Activated CD4-positive, alpha-beta T cell treated with anti-CD3 and anti-CD28 coated beads for 36 hours (primary cell): ENCODE measurements at regions of chr2 and their contacts with region 1.

Region 1: DNA sequence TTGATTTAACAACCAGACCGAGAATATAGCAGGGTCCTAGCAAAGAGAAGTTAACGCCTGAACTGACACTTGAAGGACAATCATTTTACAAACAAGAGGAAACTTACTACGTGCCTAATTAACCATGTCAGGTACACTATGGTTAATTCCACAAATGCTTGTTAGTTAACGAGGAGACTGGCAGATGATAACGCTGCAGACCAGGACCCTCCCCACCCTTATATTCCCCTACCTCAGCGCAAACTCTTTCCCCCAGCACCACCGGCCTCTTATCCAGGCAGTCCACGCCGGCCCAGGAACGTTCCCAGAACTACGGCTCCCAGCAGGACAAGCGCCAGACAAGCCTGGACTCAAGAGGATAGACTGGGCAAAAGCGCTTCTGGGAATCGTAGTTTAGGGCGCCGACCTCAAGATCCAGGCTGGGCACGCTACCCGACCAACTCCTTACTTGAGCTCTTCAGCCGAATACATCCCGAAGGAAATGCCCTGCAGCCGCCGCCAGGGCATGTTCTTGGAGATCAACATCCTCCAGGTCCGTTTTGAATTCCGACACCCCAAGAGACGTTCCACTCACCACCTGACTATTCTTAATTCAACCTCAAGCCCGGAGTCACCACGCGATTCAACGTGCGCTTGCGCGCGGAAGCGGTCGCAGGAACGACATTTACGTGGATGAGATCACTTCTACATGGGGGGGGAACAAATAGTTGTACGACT is at the start of gene POLR1A:
- DNase-seq: peak; percentile 90
- ATAC-seq: peak; percentile 75
- H3K4me3 Mint-ChIP-seq: peak within 1 kb of the TSS; percentile 88
- H3K27ac Mint-ChIP-seq: peak within 1 kb of the TSS; percentile 99
- H3K4me1 Mint-ChIP-seq: peaks cover 54% of the 10 kb centered on the region
- H3K27me3 Mint-ChIP-seq: no peaks in the 10 kb centered on the region
- total RNA-seq, gene POLR1A: 38.1 to 45.5 TPM

Region 2: DNA sequence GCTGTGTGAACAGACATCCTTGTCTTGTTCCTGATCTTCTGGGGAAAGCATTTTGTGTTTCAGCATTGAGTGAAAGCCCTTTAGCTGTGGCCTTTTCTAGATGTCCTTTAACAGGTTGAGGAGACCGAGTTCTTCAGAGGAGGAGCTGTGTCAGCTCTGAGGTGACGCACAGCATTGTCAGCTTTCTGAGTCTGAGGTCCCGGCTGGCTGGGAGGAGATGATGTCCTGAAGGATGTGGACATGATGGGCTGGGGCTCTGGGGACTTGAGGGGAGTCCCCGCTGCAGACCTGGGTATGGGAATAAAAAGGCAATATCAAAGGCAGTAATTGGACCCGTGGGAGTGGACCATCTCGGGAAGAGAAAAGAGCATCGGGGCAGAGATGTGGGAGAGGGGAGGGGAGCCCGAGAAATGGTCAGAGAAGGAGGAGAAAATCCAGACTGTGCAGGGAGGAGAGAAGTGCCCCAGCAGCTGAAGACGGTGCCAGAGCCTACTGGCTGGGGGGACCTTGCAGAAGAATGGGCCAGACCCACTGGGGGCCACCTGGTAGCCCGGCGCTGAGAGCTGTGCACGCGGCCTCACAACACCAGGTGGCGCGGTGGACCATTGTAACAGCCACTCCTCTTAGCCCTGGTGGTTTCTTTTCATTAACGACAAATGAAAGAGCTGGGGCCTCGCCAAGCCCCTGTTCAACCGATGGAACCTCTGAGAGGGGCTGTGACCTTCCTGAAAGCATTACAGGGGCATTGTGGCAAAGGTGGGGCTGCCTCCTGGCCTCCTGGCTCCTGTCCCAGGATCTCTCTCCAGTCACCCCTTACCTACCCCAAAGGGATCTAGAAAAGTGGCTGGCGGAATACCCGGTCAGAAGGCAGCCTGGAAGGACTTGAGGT is 278.2 kb before region 1 on chr2:
- CTCF ChIA-PET with region 1: interaction called, 5 read pairs
- POLR2A ChIA-PET with region 1: interaction called, 3 read pairs
- intact Hi-C with region 1: loop called in 1 of 2 experiments (anchors 1 kb)
- DNase-seq: peak; percentile 90
- ATAC-seq: peak; percentile 93
- H3K4me3 Mint-ChIP-seq: no peak overlapping the region
- H3K27ac Mint-ChIP-seq: peak overlapping the region; percentile 10
- H3K4me1 Mint-ChIP-seq: peaks cover 15% of the 10 kb centered on the region
- H3K27me3 Mint-ChIP-seq: no peaks in the 10 kb centered on the region

Region 3: GRCh38 chr2:86185517-86186212 is 80.3 kb after region 1 on chr2:
- CTCF ChIA-PET with region 1: no interaction called
- POLR2A ChIA-PET with region 1: interaction called, 5 read pairs
- intact Hi-C with region 1: loop called in 1 of 2 experiments (anchors 2 kb)
- DNase-seq: no peak
- ATAC-seq: peak; percentile 53
- H3K4me3 Mint-ChIP-seq: peak overlapping the region; percentile 61
- H3K27ac Mint-ChIP-seq: peak overlapping the region; percentile 94
- H3K4me1 Mint-ChIP-seq: peaks cover 73% of the 10 kb centered on the region
- H3K27me3 Mint-ChIP-seq: no peaks in the 10 kb centered on the region

Region 4: DNA sequence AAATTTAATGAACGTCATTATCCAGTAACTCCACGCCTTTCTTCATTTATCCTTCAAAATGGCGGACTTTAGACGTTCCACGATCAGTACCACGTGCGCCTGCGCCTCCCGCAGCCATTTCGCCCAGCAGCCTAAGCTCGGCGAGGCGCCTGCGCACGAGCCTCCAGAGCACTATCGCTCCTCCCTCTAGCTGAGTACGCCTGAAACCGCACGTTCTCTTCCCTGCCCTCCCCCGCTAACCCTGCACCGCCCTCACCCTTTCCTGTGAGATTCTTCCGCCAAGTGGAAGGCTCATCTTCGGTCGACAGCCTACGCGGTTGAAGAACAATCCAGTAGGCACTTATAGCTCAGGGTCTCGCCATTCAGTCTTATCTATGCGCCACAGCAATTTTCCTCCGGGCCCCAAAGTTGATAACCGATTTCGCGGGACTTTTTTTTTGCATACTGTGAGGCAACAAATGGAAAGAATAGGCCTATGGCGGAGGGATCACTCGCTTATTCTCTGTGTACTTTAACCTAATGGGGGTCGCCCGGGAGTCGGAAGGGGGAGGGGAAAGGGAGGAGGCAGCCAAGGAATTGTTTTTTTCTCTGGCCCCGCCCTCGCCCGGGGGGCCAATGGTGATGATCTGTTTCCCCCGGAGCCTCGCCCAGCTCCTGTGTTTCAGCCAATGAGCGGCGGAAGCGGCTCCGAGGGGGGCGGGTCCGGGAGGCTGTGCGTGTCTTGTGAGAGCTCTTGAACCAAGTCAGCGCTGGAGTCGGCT is 335.4 kb after region 1 on chr2 and contains the start of gene KDM3A:
- CTCF ChIA-PET with region 1: no interaction called
- POLR2A ChIA-PET with region 1: no interaction called
- intact Hi-C with region 1: loop called (anchors 1 to 5 kb)
- DNase-seq: peak; percentile 100
- ATAC-seq: peak; percentile 88
- H3K4me3 Mint-ChIP-seq: peak within 1 kb of the TSS; percentile 90
- H3K27ac Mint-ChIP-seq: peak within 1 kb of the TSS; percentile 99
- H3K4me1 Mint-ChIP-seq: peaks cover 37% of the 10 kb centered on the region
- H3K27me3 Mint-ChIP-seq: no peaks in the 10 kb centered on the region
- total RNA-seq, gene KDM3A: 68.9 to 82.9 TPM

Region 5: GRCh38 chr2:86623651-86624541 is 518.5 kb after region 1 on chr2 and contains the start of gene RNF103:
- CTCF ChIA-PET with region 1: no interaction called
- POLR2A ChIA-PET with region 1: no interaction called
- intact Hi-C with region 1: loop called in 1 of 2 experiments (anchors 5 kb)
- DNase-seq: peak; percentile 96
- ATAC-seq: peak; percentile 89
- H3K4me3 Mint-ChIP-seq: peak within 1 kb of the TSS; percentile 95
- H3K27ac Mint-ChIP-seq: peak within 1 kb of the TSS; percentile 96
- H3K4me1 Mint-ChIP-seq: peaks cover 29% of the 10 kb centered on the region
- H3K27me3 Mint-ChIP-seq: peaks cover 2% of the 10 kb centered on the region
- total RNA-seq, gene RNF103: 8.4 to 10.0 TPM